ENCODE measurements at regions of chr2 and their contacts with region 1.

Region 1: DNA sequence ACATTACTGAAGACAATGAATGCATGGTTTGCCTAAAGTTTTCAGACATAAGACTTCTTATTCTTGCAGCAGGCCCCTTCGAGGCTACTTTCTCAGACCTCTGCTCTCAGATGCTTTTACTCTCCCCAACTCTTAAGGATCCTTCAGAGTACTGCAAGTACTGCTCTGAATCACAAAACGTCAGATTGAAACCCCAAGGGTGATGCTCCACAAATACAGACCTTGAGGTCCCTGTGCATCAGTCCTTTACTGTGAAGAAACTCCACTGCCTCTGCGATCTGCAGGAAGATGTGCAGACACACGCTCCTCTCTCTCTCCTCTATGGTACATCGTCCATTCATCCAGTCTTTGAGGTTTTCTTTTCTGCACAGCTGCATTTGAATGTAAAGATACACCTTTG is 52.8 kb downstream of the EIF2AK3 start:
- DNase-seq: no peak
- H3K4me3 ChIP-seq: no peak overlapping the region
- CTCF ChIP-seq: no peak

Region 2: DNA sequence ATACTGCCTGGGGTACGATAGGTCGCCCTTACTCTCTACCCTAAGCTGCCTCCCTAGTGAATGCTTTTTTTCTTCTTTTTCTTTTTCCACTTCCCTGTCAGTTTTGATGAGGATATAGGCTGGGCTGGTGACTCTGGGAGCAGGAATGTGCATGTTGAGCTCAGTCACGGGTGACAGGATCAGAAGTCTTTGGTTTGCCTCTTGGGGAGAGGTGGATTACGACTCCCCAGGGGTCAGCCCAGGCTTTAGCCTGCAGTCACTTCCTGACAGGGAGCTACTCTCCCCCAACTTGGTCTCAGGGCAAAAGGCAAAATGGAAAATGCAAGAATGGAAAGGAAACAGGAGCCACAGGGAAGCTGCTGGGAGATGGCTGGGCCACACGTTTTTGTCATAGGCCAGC is 347.0 kb before region 1 on chr2:
- in situ Hi-C with region 1: no loop called
- DNase-seq: peak; percentile 3
- H3K4me3 ChIP-seq: no peak overlapping the region
- CTCF ChIP-seq: no peak

Region 3: DNA sequence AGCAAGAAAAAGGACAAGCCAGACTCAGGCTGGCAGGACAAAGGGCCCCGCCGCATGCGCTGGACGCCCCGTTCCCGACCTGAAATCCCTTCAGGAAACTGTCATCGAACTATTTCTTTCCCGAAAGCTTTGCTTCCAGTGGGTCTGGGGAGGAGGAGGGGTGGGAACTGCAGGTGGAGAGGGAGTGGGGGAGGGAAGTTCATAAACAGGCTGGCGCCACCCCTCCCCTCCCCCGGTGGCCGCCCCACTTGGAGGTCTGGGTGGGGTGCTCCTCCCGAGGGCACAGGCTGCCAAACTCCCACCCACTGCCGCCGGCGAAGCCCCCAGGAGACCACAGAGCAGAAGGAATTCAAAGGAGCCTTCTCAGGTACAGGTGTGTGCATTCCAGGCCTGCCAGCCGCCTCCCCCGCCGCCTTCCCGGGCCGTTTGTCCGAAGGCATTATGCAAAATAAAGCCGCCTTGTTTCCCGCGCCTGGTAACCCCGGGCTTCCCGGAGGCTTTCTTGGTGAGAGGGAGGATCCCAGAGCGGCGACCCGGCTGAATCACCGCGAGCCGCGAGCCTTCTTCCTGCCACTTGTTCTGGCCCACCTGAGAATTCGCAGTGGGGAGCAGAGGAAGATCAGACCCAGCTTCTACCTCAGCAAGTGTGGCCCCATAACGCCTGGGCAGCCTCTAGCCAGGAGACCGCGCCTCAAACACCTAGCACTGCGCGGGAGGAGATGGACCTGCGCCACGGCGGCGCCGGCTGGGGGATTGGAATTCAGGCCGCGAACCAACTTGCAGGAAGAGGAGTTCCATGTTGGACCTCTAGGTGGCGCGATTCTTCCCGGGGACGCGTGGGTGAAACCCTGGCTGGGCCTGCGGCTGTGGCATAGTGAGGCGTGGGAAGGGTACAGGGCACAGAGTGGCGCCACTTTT is 223.9 kb before region 1 on chr2:
- in situ Hi-C with region 1: no loop called
- DNase-seq: no peak
- H3K4me3 ChIP-seq: no peak overlapping the region
- CTCF ChIP-seq: peak; percentile 50

Region 4: GRCh38 chr2:88517759-88518201 is 56.7 kb before region 1 on chr2:
- in situ Hi-C with region 1: loop called (anchors 5 kb)
- DNase-seq: no peak
- H3K4me3 ChIP-seq: no peak overlapping the region
- CTCF ChIP-seq: no peak

Region 5: GRCh38 chr2:88614497-88615157 is 40.2 kb after region 1 on chr2:
- in situ Hi-C with region 1: no loop called
- DNase-seq: no peak
- H3K4me3 ChIP-seq: no peak overlapping the region
- CTCF ChIP-seq: no peak

Region 6: DNA sequence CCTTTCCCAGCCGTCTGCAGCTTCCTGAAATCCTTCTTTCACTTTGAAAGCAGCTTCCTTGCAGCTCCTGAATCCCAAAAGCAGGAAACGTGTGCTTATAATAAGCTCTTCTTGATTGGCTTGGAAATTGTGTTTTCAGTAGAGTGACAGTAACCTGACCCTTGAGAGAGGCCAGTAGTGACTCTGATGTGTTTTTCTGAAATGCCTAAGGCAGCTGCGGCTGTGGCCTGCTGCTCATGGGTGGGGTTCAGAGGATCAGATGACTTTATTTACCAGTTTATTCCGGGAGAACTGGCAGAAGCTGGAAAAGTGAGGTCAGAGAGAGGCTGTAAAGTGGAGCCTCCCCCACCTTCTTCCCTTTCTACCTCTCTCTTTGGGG is 85.1 kb after region 1 on chr2:
- in situ Hi-C with region 1: loop called (anchors 10 kb)
- DNase-seq: no peak
- H3K4me3 ChIP-seq: no peak overlapping the region
- CTCF ChIP-seq: no peak

Region 7: GRCh38 chr2:88669371-88670214 is 95.1 kb after region 1 on chr2:
- in situ Hi-C with region 1: loop called (anchors 5 kb)
- DNase-seq: peak; percentile 28
- H3K4me3 ChIP-seq: no peak overlapping the region
- CTCF ChIP-seq: peak; percentile 73

Measured in astrocyte of the cerebellum (primary cell).